CD8-positive, alpha-beta T cell (primary cell): ENCODE measurements at regions of chr2 and their contacts with region 1.

Region 1: GRCh38 chr2:83879114-83879513 is 580.0 kb downstream of the SUCLG1 start:
- DNase-seq: no peak
- ATAC-seq: no peak
- H3K4me3 ChIP-seq: no peak overlapping the region
- H3K4me3 Mint-ChIP-seq: no peak overlapping the region
- H3K27ac ChIP-seq: no peak overlapping the region
- H3K27ac Mint-ChIP-seq: no peak overlapping the region
- H3K4me1 ChIP-seq: no peaks in the 10 kb centered on the region
- H3K4me1 Mint-ChIP-seq: no peaks in the 10 kb centered on the region
- H3K27me3 ChIP-seq: no peaks in the 10 kb centered on the region
- H3K27me3 Mint-ChIP-seq: no peaks in the 10 kb centered on the region
- CTCF ChIP-seq: no peak

Region 2: GRCh38 chr2:83331810-83332209 is 547.3 kb before region 1 on chr2:
- CTCF ChIA-PET with region 1: no interaction called
- POLR2A ChIA-PET with region 1: no interaction called
- intact Hi-C with region 1: no loop called
- DNase-seq: no peak
- ATAC-seq: no peak
- H3K4me3 ChIP-seq: no peak overlapping the region
- H3K4me3 Mint-ChIP-seq: no peak overlapping the region
- H3K27ac ChIP-seq: no peak overlapping the region
- H3K27ac Mint-ChIP-seq: no peak overlapping the region
- H3K4me1 ChIP-seq: no peaks in the 10 kb centered on the region
- H3K4me1 Mint-ChIP-seq: no peaks in the 10 kb centered on the region
- H3K27me3 ChIP-seq: no peaks in the 10 kb centered on the region
- H3K27me3 Mint-ChIP-seq: no peaks in the 10 kb centered on the region
- CTCF ChIP-seq: no peak

Region 3: DNA sequence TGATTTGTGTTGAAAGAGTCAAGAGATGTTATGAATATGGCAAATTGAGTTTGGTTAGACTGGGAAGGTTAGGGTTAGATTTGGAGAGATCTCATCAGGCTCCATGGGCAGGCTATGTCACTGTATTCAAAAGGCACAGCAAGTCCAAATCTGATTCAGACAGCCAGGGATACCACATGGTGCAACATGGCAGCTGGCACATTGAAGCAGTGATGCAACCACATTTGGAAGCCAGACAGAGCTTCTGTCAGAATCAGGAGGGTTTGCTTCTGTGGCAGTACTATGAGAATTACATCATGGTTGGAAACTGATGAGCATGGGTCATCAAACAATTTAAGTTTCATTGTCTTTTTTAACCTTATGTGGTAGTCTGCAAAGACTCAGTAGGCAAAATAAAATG is 192.3 kb before region 1 on chr2:
- CTCF ChIA-PET with region 1: no interaction called
- POLR2A ChIA-PET with region 1: no interaction called
- intact Hi-C with region 1: no loop called
- DNase-seq: no peak
- ATAC-seq: no peak
- H3K4me3 ChIP-seq: no peak overlapping the region
- H3K4me3 Mint-ChIP-seq: no peak overlapping the region
- H3K27ac ChIP-seq: no peak overlapping the region
- H3K27ac Mint-ChIP-seq: no peak overlapping the region
- H3K4me1 ChIP-seq: no peaks in the 10 kb centered on the region
- H3K4me1 Mint-ChIP-seq: no peaks in the 10 kb centered on the region
- H3K27me3 ChIP-seq: no peaks in the 10 kb centered on the region
- H3K27me3 Mint-ChIP-seq: no peaks in the 10 kb centered on the region
- CTCF ChIP-seq: no peak

Region 4: GRCh38 chr2:83900862-83901261 is 21.7 kb after region 1 on chr2:
- CTCF ChIA-PET with region 1: no interaction called
- POLR2A ChIA-PET with region 1: no interaction called
- intact Hi-C with region 1: loop called in 1 of 2 experiments (anchors 1 kb)
- DNase-seq: no peak
- ATAC-seq: no peak
- H3K4me3 ChIP-seq: no peak overlapping the region
- H3K4me3 Mint-ChIP-seq: no peak overlapping the region
- H3K27ac ChIP-seq: no peak overlapping the region
- H3K27ac Mint-ChIP-seq: no peak overlapping the region
- H3K4me1 ChIP-seq: no peaks in the 10 kb centered on the region
- H3K4me1 Mint-ChIP-seq: no peaks in the 10 kb centered on the region
- H3K27me3 ChIP-seq: no peaks in the 10 kb centered on the region
- H3K27me3 Mint-ChIP-seq: peaks cover 3% of the 10 kb centered on the region
- CTCF ChIP-seq: no peak